ENCODE measurements at regions of chr2 and their contacts with region 1.

Region 1: DNA sequence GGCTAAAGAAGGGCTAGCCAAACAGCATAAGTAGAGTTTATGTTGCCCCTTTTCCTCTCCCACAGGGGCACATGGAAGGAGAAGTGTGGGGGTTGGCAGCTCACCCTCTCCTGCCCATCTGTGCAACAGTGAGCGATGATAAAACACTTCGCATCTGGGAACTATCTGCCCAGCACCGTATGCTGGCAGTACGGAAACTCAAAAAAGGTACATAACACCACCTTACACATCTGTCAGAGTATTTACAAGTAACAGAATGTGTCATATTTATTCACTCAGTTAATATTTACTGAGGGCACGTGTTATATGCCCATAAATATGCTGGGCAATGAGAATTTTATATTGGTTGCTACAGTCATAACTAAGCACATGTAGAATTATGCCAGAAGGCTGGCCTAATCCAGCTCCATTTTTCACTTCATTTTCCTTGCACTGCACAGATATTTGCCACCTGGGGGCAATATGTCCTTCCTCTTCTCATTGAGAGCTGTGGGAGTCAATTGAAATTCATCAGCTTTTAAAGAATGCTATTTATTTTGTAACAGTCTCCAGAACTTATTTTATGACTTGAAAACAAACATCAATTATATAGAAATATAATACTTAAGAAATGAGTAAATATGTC is 150.6 kb downstream of the RTN4 start:
- DNase-seq: peak; percentile 48
- H3K4me3 ChIP-seq: no peak overlapping the region
- H3K27ac ChIP-seq: no peak overlapping the region
- H3K4me1 ChIP-seq: peaks cover 10% of the 10 kb centered on the region
- H3K27me3 ChIP-seq: peaks cover 5 to 6% of the 10 kb centered on the region in 2 experiments
- CTCF ChIP-seq: peak; percentile 31 to 34
- POLR2A ChIP-seq: no peak

Region 2: GRCh38 chr2:54966165-54966832 is 66.6 kb after region 1 on chr2:
- CTCF ChIA-PET with region 1: interaction called, 14 read pairs
- POLR2A ChIA-PET with region 1: no interaction called
- dilution Hi-C with region 1: no loop called
- intact Hi-C with region 1: no loop called
- DNase-seq: peak; percentile 47
- H3K4me3 ChIP-seq: no peak overlapping the region
- H3K27ac ChIP-seq: no peak overlapping the region
- H3K4me1 ChIP-seq: peaks cover 16% of the 10 kb centered on the region
- H3K27me3 ChIP-seq: no peaks in the 10 kb centered on the region
- CTCF ChIP-seq: no peak
- POLR2A ChIP-seq: no peak

Region 3: GRCh38 chr2:55003706-55004639 is 104.3 kb after region 1 on chr2:
- CTCF ChIA-PET with region 1: interaction called, 11 read pairs
- POLR2A ChIA-PET with region 1: no interaction called
- dilution Hi-C with region 1: no loop called
- intact Hi-C with region 1: no loop called
- DNase-seq: no peak
- H3K4me3 ChIP-seq: no peak overlapping the region
- H3K27ac ChIP-seq: no peak overlapping the region
- H3K4me1 ChIP-seq: peaks cover 11% of the 10 kb centered on the region
- H3K27me3 ChIP-seq: no peaks in the 10 kb centered on the region
- CTCF ChIP-seq: no peak
- POLR2A ChIP-seq: no peak

Region 4: GRCh38 chr2:55168221-55169154 is 268.8 kb after region 1 on chr2:
- CTCF ChIA-PET with region 1: interaction called, 198 read pairs
- POLR2A ChIA-PET with region 1: no interaction called
- dilution Hi-C with region 1: no loop called
- intact Hi-C with region 1: loop called (anchors 2 kb)
- DNase-seq: peak; percentile 83
- H3K4me3 ChIP-seq: no peak overlapping the region
- H3K27ac ChIP-seq: no peak overlapping the region
- H3K4me1 ChIP-seq: peaks cover 28% of the 10 kb centered on the region
- H3K27me3 ChIP-seq: no peaks in the 10 kb centered on the region
- CTCF ChIP-seq: peak; percentile 64 to 67
- POLR2A ChIP-seq: no peak

Region 5: DNA sequence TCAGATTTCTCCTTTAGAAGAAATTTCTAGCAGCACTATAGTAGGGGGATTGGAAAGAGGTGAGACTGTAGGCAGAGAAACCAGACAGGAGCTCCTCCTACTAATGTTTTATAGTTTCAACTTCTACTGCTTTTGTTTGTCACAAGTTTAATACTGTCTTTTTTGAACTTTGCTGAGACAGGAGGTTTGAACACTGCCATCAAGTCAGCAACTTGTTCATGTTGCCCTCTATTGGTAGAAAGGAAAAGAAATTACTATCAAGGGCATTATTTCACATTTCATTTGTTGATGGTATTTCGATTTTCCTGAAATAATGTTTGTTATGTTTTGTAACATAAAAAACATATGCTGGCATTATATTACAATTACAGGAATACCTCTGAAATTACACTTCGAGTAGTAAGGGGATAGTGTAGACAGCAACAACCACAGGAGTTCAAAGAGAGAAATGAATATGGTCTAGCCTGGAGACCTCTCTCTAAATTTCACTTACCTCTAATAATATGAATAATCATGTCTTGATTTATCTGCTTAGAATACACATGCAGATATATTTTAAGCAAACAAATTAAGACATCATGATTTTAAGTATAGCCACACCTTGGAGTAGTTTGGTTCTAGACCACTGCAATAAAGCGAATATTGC is 532.4 kb after region 1 on chr2:
- CTCF ChIA-PET with region 1: interaction called, 11 read pairs
- POLR2A ChIA-PET with region 1: no interaction called
- dilution Hi-C with region 1: no loop called
- intact Hi-C with region 1: no loop called
- DNase-seq: peak; percentile 58
- H3K4me3 ChIP-seq: no peak overlapping the region
- H3K27ac ChIP-seq: no peak overlapping the region
- H3K4me1 ChIP-seq: peaks cover 2% of the 10 kb centered on the region
- H3K27me3 ChIP-seq: no peaks in the 10 kb centered on the region
- CTCF ChIP-seq: peak; percentile 30 to 52
- POLR2A ChIP-seq: no peak

Measured in endothelial cell of umbilical vein (primary cell).